ENCODE measurements at regions of chr1 and their contacts with region 1.

Region 1: GRCh38 chr1:113042285-113043143 is 30.5 kb upstream of the LRIG2 start:
- DNase-seq: peak in 1 of 9 donors; percentile 13
- ATAC-seq: peak; percentile 83
- H3K4me3 ChIP-seq: no peak overlapping the region
- H3K4me3 Mint-ChIP-seq: no peak overlapping the region
- H3K27ac ChIP-seq: no peak overlapping the region
- H3K27ac Mint-ChIP-seq: peak overlapping the region in 2 of 9 donors; percentile 58 to 60
- H3K4me1 ChIP-seq: peaks cover 6 to 18% of the 10 kb centered on the region in 2 donors
- H3K4me1 Mint-ChIP-seq: peaks cover 16 to 37% (median 22%) of the 10 kb centered on the region in 7 donors
- H3K27me3 ChIP-seq: no peaks in the 10 kb centered on the region
- H3K27me3 Mint-ChIP-seq: peaks cover 0 to 10% (median 0%) of the 10 kb centered on the region in 5 donors

Region 2: DNA sequence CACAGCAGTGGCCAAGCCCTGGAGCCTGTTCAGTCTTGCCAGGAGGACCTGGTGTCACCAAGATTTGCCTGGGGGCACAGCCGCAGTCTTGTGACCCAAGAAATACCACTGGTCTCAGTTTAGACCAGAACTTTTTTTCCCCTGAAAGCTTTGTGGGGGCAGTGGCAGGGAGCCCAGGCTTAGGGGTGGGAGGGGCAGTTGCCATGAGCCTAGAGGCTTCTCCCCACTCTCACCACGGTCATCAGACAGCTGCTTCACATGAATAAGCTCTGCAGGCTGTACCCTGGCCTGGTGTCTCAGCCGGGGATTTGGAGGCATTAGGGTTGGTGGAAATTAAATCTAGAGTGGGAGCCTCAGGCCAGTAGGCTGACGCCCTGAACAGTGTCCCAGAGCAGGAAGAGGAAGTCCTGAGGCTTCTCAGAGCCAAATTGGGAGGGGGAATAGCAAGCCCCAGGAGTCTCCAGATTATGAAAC is 160.2 kb before region 1 on chr1:
- CTCF ChIA-PET with region 1: no interaction called
- POLR2A ChIA-PET with region 1: no interaction called
- intact Hi-C with region 1: loop called (anchors 1 to 2 kb)
- DNase-seq: no peak
- ATAC-seq: peak; percentile 16
- H3K4me3 ChIP-seq: no peak overlapping the region
- H3K4me3 Mint-ChIP-seq: no peak overlapping the region
- H3K27ac ChIP-seq: no peak overlapping the region
- H3K27ac Mint-ChIP-seq: no peak overlapping the region
- H3K4me1 ChIP-seq: no peaks in the 10 kb centered on the region
- H3K4me1 Mint-ChIP-seq: peaks cover 0 to 3% (median 0%) of the 10 kb centered on the region in 7 donors
- H3K27me3 ChIP-seq: no peaks in the 10 kb centered on the region
- H3K27me3 Mint-ChIP-seq: peaks cover 0 to 24% (median 4%) of the 10 kb centered on the region in 5 donors

Region 3: DNA sequence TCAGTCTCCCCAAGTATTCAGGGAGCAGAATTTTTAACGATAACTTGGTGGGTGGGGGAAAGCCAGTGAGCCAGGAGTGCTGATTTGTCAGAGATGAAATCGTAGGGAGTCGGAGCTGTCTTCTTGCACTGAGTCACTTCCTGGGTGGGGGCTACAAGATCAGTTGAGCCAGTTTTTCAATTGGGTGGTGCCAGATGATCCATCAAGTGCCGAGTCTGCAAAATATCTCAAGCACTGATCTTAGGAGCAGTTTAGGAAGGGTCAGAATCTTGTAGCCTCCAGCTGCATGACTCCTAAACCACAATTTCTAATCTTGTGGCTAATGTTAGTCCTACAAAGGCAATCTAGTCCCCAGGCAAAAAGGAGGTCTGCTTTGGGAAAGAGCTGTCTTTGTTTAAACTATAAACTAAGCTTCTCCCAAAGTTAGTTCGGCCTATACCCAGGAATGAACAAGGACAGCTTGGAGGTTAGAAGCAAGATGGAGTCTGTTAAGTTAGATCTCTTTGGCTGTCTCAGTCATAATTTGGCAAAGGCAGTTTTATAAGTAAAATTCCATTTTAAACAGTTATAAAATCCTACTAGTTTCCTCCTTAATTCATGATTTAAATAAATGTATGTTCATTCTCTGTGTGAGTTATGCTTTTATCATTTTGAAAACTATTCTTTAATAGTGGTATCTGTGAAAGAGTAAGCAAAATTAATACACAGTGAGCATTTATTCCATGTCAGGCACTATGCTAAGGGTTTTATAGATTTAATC is 138.3 kb before region 1 on chr1:
- CTCF ChIA-PET with region 1: no interaction called
- POLR2A ChIA-PET with region 1: no interaction called
- intact Hi-C with region 1: no loop called
- DNase-seq: peak in 1 of 9 donors; percentile 64
- ATAC-seq: no peak
- H3K4me3 ChIP-seq: no peak overlapping the region
- H3K4me3 Mint-ChIP-seq: peak overlapping the region in 1 of 10 donors; percentile 58
- H3K27ac ChIP-seq: no peak overlapping the region
- H3K27ac Mint-ChIP-seq: peak overlapping the region in 3 of 9 donors; percentile 15 to 81 (median 44)
- H3K4me1 ChIP-seq: no peaks in the 10 kb centered on the region
- H3K4me1 Mint-ChIP-seq: peaks cover 0 to 25% (median 5%) of the 10 kb centered on the region in 7 donors
- H3K27me3 ChIP-seq: no peaks in the 10 kb centered on the region
- H3K27me3 Mint-ChIP-seq: no peaks in the 10 kb centered on the region

Measured in naive thymus-derived CD4-positive, alpha-beta T cell (primary cell).